CD4-positive, alpha-beta T cell (primary cell): ENCODE measurements at regions of chr11 and their contacts with region 1.

Region 1: DNA sequence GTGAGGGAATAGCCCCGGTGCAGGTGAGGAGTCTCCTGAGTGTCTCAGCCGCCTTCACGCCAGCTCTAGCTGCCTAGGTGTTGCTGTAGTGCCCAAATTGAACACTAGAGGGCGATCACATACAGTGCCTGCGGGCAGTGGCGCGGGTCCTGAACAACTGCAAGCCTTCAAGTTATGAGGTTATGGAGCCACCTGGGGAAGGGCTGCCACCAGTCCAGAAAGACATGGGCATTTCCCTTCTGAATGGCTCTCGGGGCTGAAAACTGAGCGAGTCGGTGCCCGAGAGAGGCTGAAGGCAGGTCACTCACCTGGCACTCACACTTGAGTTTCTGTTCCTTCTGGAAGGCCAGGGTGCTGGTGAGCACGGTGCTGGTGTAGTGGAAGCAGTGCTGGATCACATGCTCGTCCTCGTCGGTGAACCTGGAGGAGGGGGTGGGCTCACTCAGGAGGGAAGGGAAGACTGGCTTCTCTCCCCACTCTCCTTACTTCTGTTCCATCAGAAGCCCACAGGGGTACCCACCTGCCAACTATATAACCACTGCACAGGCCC is 88.4 kb downstream of the PDE2A start:
- DNase-seq: peak; percentile 37 to 88 (median 61)
- ATAC-seq: peak; percentile 81
- H3K4me3 ChIP-seq: peak overlapping the region; percentile 58
- H3K4me3 Mint-ChIP-seq: peak overlapping the region; percentile 90
- H3K27ac ChIP-seq: no peak overlapping the region
- H3K27ac Mint-ChIP-seq: no peak overlapping the region
- H3K4me1 ChIP-seq: peaks cover 38% of the 10 kb centered on the region
- H3K4me1 Mint-ChIP-seq: peaks cover 30% of the 10 kb centered on the region
- H3K27me3 ChIP-seq: peaks cover 21 to 23% of the 10 kb centered on the region in 2 experiments
- H3K27me3 Mint-ChIP-seq: peaks cover 46% of the 10 kb centered on the region
- CTCF ChIP-seq: peak; percentile 95

Region 2: GRCh38 chr11:72609045-72609444 is 23.2 kb after region 1 on chr11:
- CTCF ChIA-PET with region 1: interaction called, 4 read pairs
- POLR2A ChIA-PET with region 1: no interaction called
- intact Hi-C with region 1: loop called in 1 of 2 experiments (anchors 2 kb)
- DNase-seq: peak in 3 of 14 experiments; percentile 21 to 45 (median 38)
- ATAC-seq: no peak
- H3K4me3 ChIP-seq: no peak overlapping the region
- H3K4me3 Mint-ChIP-seq: no peak overlapping the region
- H3K27ac ChIP-seq: no peak overlapping the region
- H3K27ac Mint-ChIP-seq: no peak overlapping the region
- H3K4me1 ChIP-seq: peaks cover 12% of the 10 kb centered on the region
- H3K4me1 Mint-ChIP-seq: peaks cover 8% of the 10 kb centered on the region
- H3K27me3 ChIP-seq: peaks cover 0 to 16% of the 10 kb centered on the region in 2 experiments
- H3K27me3 Mint-ChIP-seq: peaks cover 39% of the 10 kb centered on the region
- CTCF ChIP-seq: peak; percentile 28

Region 3: DNA sequence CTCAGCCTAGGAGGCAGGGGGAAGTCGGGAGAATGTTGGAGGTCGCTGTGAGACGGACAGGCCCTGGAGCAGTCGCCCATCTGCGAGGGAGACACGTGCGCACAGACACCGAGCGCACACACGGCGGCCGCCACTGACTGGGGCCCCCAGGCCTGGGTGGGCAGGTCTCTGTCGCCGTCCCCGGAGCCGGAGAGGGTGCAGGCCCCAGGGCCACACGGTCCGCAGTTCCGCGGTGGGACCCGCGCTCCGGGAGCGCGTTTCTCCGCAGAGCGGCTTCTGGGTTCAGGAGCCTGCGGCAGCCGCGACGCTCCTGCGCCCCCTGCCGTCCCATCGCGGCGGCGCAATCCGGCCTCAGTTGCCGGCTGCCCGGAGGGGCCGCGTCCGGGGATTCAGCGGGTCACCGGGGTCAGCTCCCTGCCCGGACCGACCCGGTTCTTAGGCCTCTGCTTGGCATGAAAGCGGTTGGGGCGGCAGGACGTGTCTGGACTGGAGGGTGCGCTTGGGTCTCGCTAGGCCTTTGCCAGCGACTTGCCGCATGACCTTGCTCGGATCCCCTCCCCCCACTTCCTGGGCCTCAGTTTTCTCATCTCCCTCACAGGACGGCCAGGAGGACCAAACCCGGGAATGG is 57.2 kb after region 1 on chr11:
- CTCF ChIA-PET with region 1: interaction called, 7 read pairs
- POLR2A ChIA-PET with region 1: no interaction called
- intact Hi-C with region 1: loop called (anchors 1 kb)
- DNase-seq: peak; percentile 26 to 85 (median 56)
- ATAC-seq: peak; percentile 84
- H3K4me3 ChIP-seq: peak overlapping the region; percentile 49
- H3K4me3 Mint-ChIP-seq: peak overlapping the region; percentile 30
- H3K27ac ChIP-seq: no peak overlapping the region
- H3K27ac Mint-ChIP-seq: no peak overlapping the region
- H3K4me1 ChIP-seq: peaks cover 19% of the 10 kb centered on the region
- H3K4me1 Mint-ChIP-seq: peaks cover 7% of the 10 kb centered on the region
- H3K27me3 ChIP-seq: peaks cover 19 to 21% of the 10 kb centered on the region in 2 experiments
- H3K27me3 Mint-ChIP-seq: peaks cover 13% of the 10 kb centered on the region
- CTCF ChIP-seq: peak; percentile 94

Region 4: DNA sequence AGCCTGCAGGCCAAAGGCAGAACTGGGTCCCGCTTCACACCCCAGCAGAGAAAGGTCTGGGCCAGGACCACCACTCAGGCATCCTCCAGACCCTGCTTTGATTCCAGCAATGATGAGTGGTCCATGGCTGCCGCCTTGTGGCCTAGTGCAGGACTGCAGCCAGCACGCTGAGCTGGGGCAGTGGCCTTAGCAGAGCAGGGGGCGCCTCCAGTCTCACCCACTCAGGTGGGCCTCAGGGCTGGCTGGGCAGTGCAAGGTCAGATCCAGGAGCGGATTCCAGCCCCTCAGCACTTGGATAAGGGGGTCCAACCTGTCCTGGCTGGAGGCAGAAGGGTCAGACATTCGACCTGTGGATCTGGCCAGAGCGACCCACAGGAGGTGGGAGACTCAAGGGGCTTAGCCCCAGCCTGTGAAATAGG is 98.0 kb after region 1 on chr11:
- CTCF ChIA-PET with region 1: interaction called, 6 read pairs
- POLR2A ChIA-PET with region 1: no interaction called
- intact Hi-C with region 1: loop called in 1 of 2 experiments (anchors 2 kb)
- DNase-seq: peak; percentile 49 to 76 (median 60)
- ATAC-seq: peak; percentile 86
- H3K4me3 ChIP-seq: no peak overlapping the region
- H3K4me3 Mint-ChIP-seq: no peak overlapping the region
- H3K27ac ChIP-seq: no peak overlapping the region
- H3K27ac Mint-ChIP-seq: no peak overlapping the region
- H3K4me1 ChIP-seq: peaks cover 4% of the 10 kb centered on the region
- H3K4me1 Mint-ChIP-seq: peaks cover 12% of the 10 kb centered on the region
- H3K27me3 ChIP-seq: no peaks in the 10 kb centered on the region
- H3K27me3 Mint-ChIP-seq: no peaks in the 10 kb centered on the region
- CTCF ChIP-seq: peak; percentile 88

Region 5: DNA sequence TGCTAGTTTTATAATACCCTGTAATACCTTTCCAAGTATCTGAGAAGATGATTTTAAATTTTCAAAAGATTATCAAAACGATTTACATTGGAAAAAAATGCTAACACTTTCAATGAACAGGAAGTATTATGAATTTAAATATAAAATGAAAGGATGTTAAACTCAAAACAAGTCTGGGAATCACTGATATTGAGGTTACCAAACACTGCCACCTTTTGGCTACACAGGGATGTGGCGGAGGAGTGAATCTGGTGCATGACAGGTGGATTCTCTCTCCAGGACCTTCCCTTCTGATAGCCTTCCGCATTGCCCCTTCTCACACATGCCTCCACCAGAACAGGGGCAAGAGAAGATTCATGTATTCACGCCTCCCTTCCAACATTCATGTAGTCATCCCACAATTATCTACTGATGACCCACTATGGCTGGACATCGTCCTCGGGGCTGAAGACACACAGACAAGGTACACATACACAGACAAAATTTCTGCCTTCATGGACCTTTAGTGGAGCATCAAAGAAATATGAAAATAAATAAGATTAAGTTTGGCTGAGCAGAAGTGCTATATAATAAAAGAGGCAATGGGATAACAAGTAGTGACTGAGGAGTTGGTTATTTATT is 263.1 kb after region 1 on chr11:
- CTCF ChIA-PET with region 1: no interaction called
- POLR2A ChIA-PET with region 1: no interaction called
- intact Hi-C with region 1: loop called in 1 of 2 experiments (anchors 5 kb)
- DNase-seq: peak in 12 of 14 experiments; percentile 23 to 72 (median 32)
- ATAC-seq: peak; percentile 64
- H3K4me3 ChIP-seq: no peak overlapping the region
- H3K4me3 Mint-ChIP-seq: no peak overlapping the region
- H3K27ac ChIP-seq: no peak overlapping the region
- H3K27ac Mint-ChIP-seq: peak overlapping the region; percentile 25
- H3K4me1 ChIP-seq: peaks cover 4% of the 10 kb centered on the region
- H3K4me1 Mint-ChIP-seq: peaks cover 12% of the 10 kb centered on the region
- H3K27me3 ChIP-seq: no peaks in the 10 kb centered on the region
- H3K27me3 Mint-ChIP-seq: no peaks in the 10 kb centered on the region
- CTCF ChIP-seq: peak; percentile 72

Region 6: DNA sequence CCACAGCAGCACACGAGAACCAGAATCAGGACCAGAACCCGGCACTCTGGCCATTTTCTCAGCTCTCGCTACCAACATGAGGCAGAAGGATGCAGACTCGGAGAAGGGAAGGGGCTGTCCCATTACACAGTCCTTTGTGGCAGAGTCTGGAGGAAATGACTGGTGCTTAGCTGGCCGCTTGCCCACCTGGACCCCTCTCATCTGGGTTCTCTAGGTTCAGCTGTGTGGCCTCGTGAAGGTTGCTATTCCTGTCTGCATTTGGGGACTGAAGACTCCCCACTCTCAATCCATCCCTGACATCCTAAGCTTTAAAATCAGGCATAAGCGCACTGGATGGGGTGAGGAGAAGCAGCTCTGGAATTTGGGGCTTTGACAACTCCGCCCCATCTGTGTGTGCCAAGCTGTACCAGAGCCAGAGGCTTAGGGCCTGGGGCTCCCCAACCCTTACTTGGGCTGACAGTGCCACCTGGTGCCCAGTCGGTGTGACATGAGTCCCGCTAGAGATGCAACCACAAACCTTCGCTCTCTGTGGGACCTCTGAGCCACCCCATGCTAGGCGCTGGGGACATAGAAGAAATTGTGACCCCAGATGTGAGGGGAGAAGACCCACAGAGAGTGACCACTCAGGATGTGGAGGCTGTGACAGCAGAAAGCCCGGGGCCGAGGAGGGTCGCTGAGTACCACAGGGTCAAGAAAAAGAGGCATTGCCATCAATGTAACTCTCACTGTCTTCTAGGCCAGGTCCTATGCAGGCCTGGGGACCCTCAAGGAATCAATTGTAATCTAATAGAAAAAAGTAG is 592.1 kb after region 1 on chr11:
- CTCF ChIA-PET with region 1: no interaction called
- POLR2A ChIA-PET with region 1: interaction called, 3 read pairs
- intact Hi-C with region 1: loop called (anchors 1 to 5 kb)
- DNase-seq: peak; percentile 71 to 89 (median 75)
- ATAC-seq: peak; percentile 100
- H3K4me3 ChIP-seq: no peak overlapping the region
- H3K4me3 Mint-ChIP-seq: no peak overlapping the region
- H3K27ac ChIP-seq: no peak overlapping the region
- H3K27ac Mint-ChIP-seq: no peak overlapping the region
- H3K4me1 ChIP-seq: peaks cover 7% of the 10 kb centered on the region
- H3K4me1 Mint-ChIP-seq: no peaks in the 10 kb centered on the region
- H3K27me3 ChIP-seq: no peaks in the 10 kb centered on the region
- H3K27me3 Mint-ChIP-seq: no peaks in the 10 kb centered on the region
- CTCF ChIP-seq: peak; percentile 78

Region 7: GRCh38 chr11:73242251-73243079 is 656.6 kb after region 1 on chr11:
- CTCF ChIA-PET with region 1: no interaction called
- POLR2A ChIA-PET with region 1: no interaction called
- intact Hi-C with region 1: loop called (anchors 5 kb)
- DNase-seq: peak; percentile 43 to 80 (median 60)
- ATAC-seq: peak; percentile 91
- H3K4me3 ChIP-seq: no peak overlapping the region
- H3K4me3 Mint-ChIP-seq: no peak overlapping the region
- H3K27ac ChIP-seq: no peak overlapping the region
- H3K27ac Mint-ChIP-seq: no peak overlapping the region
- H3K4me1 ChIP-seq: peaks cover 9% of the 10 kb centered on the region
- H3K4me1 Mint-ChIP-seq: no peaks in the 10 kb centered on the region
- H3K27me3 ChIP-seq: no peaks in the 10 kb centered on the region
- H3K27me3 Mint-ChIP-seq: no peaks in the 10 kb centered on the region
- CTCF ChIP-seq: peak; percentile 84

Region 8: GRCh38 chr11:74388678-74389327 is 1803.0 kb after region 1 on chr11:
- CTCF ChIA-PET with region 1: no interaction called
- POLR2A ChIA-PET with region 1: no interaction called
- intact Hi-C with region 1: no loop called
- DNase-seq: peak; percentile 14 to 84 (median 62)
- ATAC-seq: peak; percentile 91
- H3K4me3 ChIP-seq: no peak overlapping the region
- H3K4me3 Mint-ChIP-seq: peak overlapping the region; percentile 35
- H3K27ac ChIP-seq: no peak overlapping the region
- H3K27ac Mint-ChIP-seq: peak overlapping the region; percentile 40
- H3K4me1 ChIP-seq: peaks cover 4% of the 10 kb centered on the region
- H3K4me1 Mint-ChIP-seq: peaks cover 38% of the 10 kb centered on the region
- H3K27me3 ChIP-seq: no peaks in the 10 kb centered on the region
- H3K27me3 Mint-ChIP-seq: no peaks in the 10 kb centered on the region
- CTCF ChIP-seq: peak; percentile 88